ENCODE measurements at regions of chr17 and their contacts with region 1.

Region 1: DNA sequence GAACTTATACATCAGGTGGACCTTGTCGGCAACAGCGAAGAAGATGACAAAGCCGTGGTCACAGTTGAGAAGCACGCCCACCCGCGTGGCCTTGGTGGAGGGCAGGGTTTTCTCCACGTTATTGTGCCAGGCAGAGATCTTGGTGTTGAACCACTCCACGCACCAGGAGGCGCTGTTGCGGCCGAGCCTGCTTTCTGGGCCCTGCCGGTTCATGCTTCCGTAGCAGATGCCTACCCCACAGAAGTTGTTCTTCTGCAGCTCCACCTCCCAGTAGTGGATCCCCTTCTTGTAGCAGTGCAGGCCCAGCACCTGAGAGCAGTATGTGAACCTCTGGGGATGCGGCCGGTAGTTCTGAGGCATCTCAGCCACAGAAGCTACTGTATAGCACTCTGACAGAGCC is 22.1 kb downstream of the TRIM25 start:
- DNase-seq: peak in 1 of 2 experiments; percentile 90
- H3K4me3 ChIP-seq: no peak overlapping the region
- H3K27ac ChIP-seq: no peak overlapping the region
- H3K4me1 ChIP-seq: peaks cover 0 to 4% (median 1%) of the 10 kb centered on the region in 4 experiments; a peak in 3 of 7 replicates
- H3K27me3 ChIP-seq: no peaks in the 10 kb centered on the region; a peak in 1 of 7 replicates
- CTCF ChIP-seq: peak; percentile 84 to 93 (median 89)
- EP300 ChIP-seq: no peak
- POLR2A ChIP-seq: no peak
- RAD21 ChIP-seq: peak; percentile 63 to 72

Region 2: DNA sequence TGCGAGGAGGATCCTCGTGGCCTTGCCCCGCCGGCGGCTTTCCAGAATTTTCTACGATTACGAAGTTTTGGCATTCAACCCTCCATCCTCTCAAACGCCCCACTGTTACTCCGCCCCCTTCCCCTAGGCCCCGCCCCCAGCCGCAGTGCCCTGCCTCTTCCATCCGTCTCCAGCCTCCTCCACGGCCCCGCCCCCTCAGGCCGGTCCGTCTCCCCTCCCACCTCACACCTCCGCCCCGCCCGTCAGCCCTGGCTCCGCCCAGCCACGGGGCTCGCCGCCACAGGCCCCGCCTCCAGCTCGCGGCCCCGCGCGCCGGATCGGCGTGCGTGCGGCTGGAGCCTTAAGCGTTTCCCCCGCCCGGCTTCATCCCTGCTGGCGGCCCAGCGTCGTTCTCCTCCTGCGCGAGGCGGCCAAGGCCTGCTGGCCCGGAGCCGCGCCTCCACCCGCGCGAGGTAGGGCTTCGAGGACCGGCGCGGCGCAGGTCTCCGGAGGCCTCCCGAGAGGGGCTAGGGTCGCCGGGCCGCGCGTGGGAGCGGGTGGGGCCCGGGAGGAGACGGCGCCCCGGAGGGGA is 57.9 kb before region 1 on chr17 and contains the starts of genes C17orf67 and DGKE:
- CTCF ChIA-PET with region 1: interaction called, 18 read pairs
- POLR2A ChIA-PET with region 1: no interaction called
- DNase-seq: peak; percentile 85 to 98
- H3K4me3 ChIP-seq: peak within 1 kb of the TSS; percentile 59 to 77 (median 74)
- H3K27ac ChIP-seq: no peak within 1 kb of the TSS; the same call in 1 of the 2 replicates
- H3K4me1 ChIP-seq: peaks cover 0 to 9% (median 5%) of the 10 kb centered on the region in 4 experiments; a peak in 5 of 7 replicates
- H3K27me3 ChIP-seq: peaks cover 0 to 8% (median 6%) of the 10 kb centered on the region in 4 experiments; a peak in 6 of 7 replicates
- CTCF ChIP-seq: no peak
- EP300 ChIP-seq: no peak
- POLR2A ChIP-seq: 0 out of 3 replicates have a peak, but pooled peaks of 1 of the 2 experiments have one; percentile 8
- RAD21 ChIP-seq: no peak
- total RNA-seq, gene C17orf67: 1.9 and 2.2 TPM in 2 replicates
- total RNA-seq, gene DGKE: 7.4 and 7.7 TPM in 2 replicates

Region 3: GRCh38 chr17:56851008-56851407 is 40.8 kb before region 1 on chr17:
- CTCF ChIA-PET with region 1: no interaction called
- POLR2A ChIA-PET with region 1: no interaction called
- DNase-seq: no peak
- H3K4me3 ChIP-seq: no peak overlapping the region
- H3K27ac ChIP-seq: no peak overlapping the region
- H3K4me1 ChIP-seq: no peaks in the 10 kb centered on the region
- H3K27me3 ChIP-seq: no peaks in the 10 kb centered on the region
- CTCF ChIP-seq: no peak
- EP300 ChIP-seq: no peak
- POLR2A ChIP-seq: no peak
- RAD21 ChIP-seq: no peak

Region 4: GRCh38 chr17:56902355-56903083 is 10.7 kb after region 1 on chr17:
- CTCF ChIA-PET with region 1: interaction called, 12 read pairs
- POLR2A ChIA-PET with region 1: interaction called, 4 read pairs
- DNase-seq: no peak
- H3K4me3 ChIP-seq: no peak overlapping the region
- H3K27ac ChIP-seq: no peak overlapping the region
- H3K4me1 ChIP-seq: no peaks in the 10 kb centered on the region
- H3K27me3 ChIP-seq: no peaks in the 10 kb centered on the region
- CTCF ChIP-seq: no peak
- EP300 ChIP-seq: no peak
- POLR2A ChIP-seq: no peak
- RAD21 ChIP-seq: no peak

Region 5: DNA sequence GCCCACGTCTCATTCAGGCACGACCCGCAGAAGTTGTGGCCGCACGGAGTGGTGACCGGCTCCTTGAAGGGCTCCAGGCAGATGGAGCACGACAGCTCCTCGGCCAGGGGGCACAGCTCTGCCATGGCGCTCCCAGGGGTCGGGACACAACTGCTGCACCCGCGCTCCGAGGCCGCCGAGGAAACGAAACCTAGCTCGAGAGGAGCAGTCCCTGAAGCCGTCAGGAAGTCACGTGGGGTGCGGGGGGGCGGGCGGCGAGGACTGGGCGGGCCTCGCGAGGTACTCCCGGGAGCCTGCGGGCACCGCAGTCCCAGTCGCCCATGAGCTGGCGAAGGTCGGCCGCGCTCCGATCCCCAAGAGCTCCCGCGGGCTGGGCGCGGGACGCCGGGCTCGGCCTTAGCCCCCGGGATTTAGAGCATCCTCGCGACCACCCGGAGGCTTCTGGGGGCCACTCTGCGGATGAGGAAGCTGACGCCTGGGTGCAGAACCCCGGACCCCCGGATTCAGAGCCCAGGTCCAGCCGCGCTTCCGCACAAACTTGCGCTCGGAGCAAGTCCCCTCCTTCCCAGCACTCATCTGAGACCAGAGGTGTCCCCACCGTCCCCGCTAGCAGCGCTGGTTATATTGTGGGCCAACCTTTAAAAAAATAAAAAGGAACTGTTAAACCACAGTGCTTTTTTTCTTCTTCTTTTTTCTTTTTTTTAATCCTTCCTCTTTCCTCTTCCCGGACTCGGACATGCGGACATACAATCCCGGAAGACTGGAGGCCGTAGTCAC is 22.3 kb after region 1 on chr17 and contains the start of gene TRIM25:
- CTCF ChIA-PET with region 1: interaction called, 11 read pairs
- POLR2A ChIA-PET with region 1: interaction called, 8 read pairs
- DNase-seq: peak in 1 of 2 experiments; percentile 83
- H3K4me3 ChIP-seq: peak within 1 kb of the TSS; percentile 49 to 79 (median 72)
- H3K27ac ChIP-seq: no peak within 1 kb of the TSS
- H3K4me1 ChIP-seq: peaks cover 3 to 9% (median 6%) of the 10 kb centered on the region in 4 experiments; a peak in 6 of 7 replicates
- H3K27me3 ChIP-seq: peaks cover 0 to 21% (median 17%) of the 10 kb centered on the region in 4 experiments; a peak in 6 of 7 replicates
- CTCF ChIP-seq: no peak
- EP300 ChIP-seq: no peak
- POLR2A ChIP-seq: peak; percentile 81 to 94
- RAD21 ChIP-seq: no peak
- total RNA-seq, gene TRIM25: 37.3 and 38.9 TPM in 2 replicates

Region 6: GRCh38 chr17:56939901-56940343 is 48.1 kb after region 1 on chr17:
- CTCF ChIA-PET with region 1: interaction called, 55 read pairs
- POLR2A ChIA-PET with region 1: interaction called, 3 read pairs
- DNase-seq: peak in 1 of 2 experiments; percentile 45
- H3K4me3 ChIP-seq: no peak overlapping the region
- H3K27ac ChIP-seq: no peak overlapping the region
- H3K4me1 ChIP-seq: no peaks in the 10 kb centered on the region
- H3K27me3 ChIP-seq: no peaks in the 10 kb centered on the region
- CTCF ChIP-seq: peak in 2 of 3 experiments; percentile 57 to 63; a peak in 2 of 4 replicates
- EP300 ChIP-seq: no peak
- POLR2A ChIP-seq: no peak
- RAD21 ChIP-seq: peak; percentile 88

Region 7: DNA sequence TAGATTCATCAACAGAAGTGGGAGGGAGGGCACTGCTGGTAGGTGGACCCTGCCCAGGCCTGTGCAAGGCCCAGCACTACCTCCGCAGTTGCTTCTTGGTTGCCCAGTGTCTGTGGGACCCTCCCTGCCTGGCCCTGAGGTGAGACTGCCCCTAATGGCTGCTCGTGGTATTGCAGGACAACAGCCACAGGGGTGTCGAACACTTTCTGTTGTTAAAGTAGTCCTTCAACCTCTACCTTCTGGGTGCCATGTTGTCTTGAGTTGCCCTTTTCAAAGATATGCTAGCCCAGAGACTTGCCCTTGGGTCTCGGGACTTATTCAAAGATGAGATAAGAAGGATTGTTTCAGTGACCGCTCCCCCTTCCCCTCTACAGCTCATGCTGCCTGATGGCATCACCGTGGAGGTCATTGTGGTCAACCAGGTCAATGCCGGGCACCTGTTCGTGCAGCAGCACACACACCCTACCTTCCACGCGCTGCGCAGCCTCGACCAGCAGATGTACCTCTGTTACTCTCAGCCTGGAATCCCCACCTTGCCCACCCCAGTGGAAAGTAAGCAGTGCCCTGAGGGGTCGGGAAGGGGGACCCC is 222.4 kb after region 1 on chr17:
- CTCF ChIA-PET with region 1: no interaction called
- POLR2A ChIA-PET with region 1: no interaction called
- DNase-seq: peak; percentile 15 to 96
- H3K4me3 ChIP-seq: no peak overlapping the region
- H3K27ac ChIP-seq: no peak overlapping the region
- H3K4me1 ChIP-seq: peaks cover 0 to 10% (median 8%) of the 10 kb centered on the region in 4 experiments; a peak in 5 of 7 replicates
- H3K27me3 ChIP-seq: no peaks in the 10 kb centered on the region
- CTCF ChIP-seq: peak; percentile 87 to 96 (median 94)
- EP300 ChIP-seq: no peak
- POLR2A ChIP-seq: no peak
- RAD21 ChIP-seq: peak; percentile 84 to 90

Measured in H1 (cell line).